Activated CD4-positive, alpha-beta memory T cell treated with anti-CD3 and anti-CD28 coated beads for 36 hours (primary cell): ENCODE measurements at regions of chr17 and their contacts with region 1.

Region 1: DNA sequence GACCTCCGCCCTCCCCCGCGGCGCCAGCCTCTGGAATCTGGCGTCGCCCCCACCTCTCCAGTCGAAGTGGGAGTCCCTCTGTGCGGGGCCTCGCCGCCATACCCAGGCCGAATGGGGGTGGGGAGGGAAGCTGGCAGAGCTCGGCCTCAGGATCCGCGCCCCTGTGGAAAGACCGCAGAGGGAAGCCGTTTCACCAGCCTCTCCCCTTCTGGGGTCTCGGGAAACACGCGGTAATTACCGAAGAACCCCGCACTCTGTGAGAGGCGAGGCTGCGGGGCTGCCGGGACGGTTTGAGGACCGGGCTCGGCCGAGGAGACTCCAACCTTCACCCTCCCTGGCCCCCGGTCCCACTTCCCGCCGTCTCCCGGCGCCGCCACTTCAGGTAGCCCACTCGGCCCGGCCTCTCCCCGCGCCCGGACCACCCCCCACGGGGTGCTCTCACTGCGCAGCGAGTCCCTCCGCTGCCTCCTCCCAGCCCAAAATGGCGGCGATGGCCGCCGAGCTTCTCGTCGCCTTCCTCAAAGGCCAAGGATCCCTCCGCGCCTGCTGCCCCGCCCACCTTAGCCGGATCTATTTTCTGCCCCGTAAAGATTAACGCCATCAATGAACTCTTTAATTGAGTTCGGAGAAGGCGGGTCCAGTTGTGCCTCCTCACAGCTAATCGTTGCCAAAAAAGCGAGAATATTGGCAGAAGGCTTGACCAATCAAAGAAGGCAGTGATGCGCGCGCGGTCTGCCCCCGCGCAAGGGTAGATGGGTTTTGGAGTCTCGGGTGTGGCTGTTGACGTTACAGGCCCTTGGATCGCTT is 453 bp upstream of the HEXIM2 start:
- DNase-seq: peak; percentile 99
- H3K4me3 Mint-ChIP-seq: peak overlapping the region; percentile 99
- H3K27ac Mint-ChIP-seq: peak overlapping the region; percentile 99
- H3K4me1 Mint-ChIP-seq: peaks cover 38% of the 10 kb centered on the region
- H3K27me3 Mint-ChIP-seq: peaks cover 2% of the 10 kb centered on the region

Region 2: DNA sequence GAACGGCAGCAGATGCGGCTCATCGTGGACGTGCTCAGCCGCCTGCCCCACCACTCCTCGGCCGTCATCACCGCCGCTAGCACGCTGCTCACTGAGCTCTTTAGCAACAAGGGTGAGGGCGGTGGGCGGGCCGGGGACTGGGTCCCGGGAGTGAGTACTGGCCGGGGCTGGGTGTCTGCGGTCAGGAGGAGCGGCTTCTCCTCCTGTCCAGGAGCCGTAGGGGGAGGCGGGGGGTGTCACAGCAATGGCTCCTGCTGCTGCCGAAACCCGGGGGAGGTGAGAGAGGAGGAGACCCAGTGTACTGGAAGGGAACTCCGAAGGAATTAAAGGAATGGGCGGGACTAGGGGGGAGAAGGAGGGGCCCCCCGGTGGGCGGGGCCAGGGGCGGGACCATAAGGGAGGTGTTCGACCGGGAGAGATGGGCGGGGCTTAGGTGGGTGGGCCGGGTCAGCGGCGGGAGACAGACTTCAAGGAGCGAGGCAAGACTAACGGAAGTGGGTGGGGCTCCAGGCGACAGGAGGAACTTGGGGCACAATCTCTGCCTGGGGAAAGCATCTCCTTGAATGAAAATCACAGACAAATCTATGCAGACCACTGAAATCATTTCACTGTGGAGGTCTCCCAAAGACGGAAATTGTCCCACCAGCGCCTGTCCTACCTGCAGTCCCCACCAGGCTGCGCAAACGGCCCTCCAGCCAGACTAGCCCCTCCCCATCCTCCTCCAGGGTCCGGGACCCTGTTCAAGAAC is 1154.5 kb before region 1 on chr17:
- CTCF ChIA-PET with region 1: no interaction called
- POLR2A ChIA-PET with region 1: no interaction called
- intact Hi-C with region 1: no loop called
- DNase-seq: peak; percentile 100
- H3K4me3 Mint-ChIP-seq: peak overlapping the region; percentile 86
- H3K27ac Mint-ChIP-seq: peak overlapping the region; percentile 3
- H3K4me1 Mint-ChIP-seq: peaks cover 23% of the 10 kb centered on the region
- H3K27me3 Mint-ChIP-seq: peaks cover 6% of the 10 kb centered on the region

Region 3: GRCh38 chr17:44864866-44865660 is 296.2 kb before region 1 on chr17:
- CTCF ChIA-PET with region 1: no interaction called
- POLR2A ChIA-PET with region 1: no interaction called
- intact Hi-C with region 1: no loop called
- DNase-seq: peak; percentile 69
- H3K4me3 Mint-ChIP-seq: no peak overlapping the region
- H3K27ac Mint-ChIP-seq: no peak overlapping the region
- H3K4me1 Mint-ChIP-seq: no peaks in the 10 kb centered on the region
- H3K27me3 Mint-ChIP-seq: no peaks in the 10 kb centered on the region

Region 4: GRCh38 chr17:45051060-45051719 is 110.0 kb before region 1 on chr17 and contains the start of gene DCAKD:
- CTCF ChIA-PET with region 1: no interaction called
- POLR2A ChIA-PET with region 1: no interaction called
- intact Hi-C with region 1: loop called (anchors 1 kb)
- DNase-seq: peak; percentile 95
- H3K4me3 Mint-ChIP-seq: peak within 1 kb of the TSS; percentile 93
- H3K27ac Mint-ChIP-seq: peak within 1 kb of the TSS; percentile 94
- H3K4me1 Mint-ChIP-seq: peaks cover 45% of the 10 kb centered on the region
- H3K27me3 Mint-ChIP-seq: no peaks in the 10 kb centered on the region
- total RNA-seq, gene DCAKD: 32.0 to 34.0 TPM

Region 5: GRCh38 chr17:45110668-45111611 is 50.3 kb before region 1 on chr17:
- CTCF ChIA-PET with region 1: no interaction called
- POLR2A ChIA-PET with region 1: no interaction called
- intact Hi-C with region 1: no loop called
- DNase-seq: no peak
- H3K4me3 Mint-ChIP-seq: no peak overlapping the region
- H3K27ac Mint-ChIP-seq: no peak overlapping the region
- H3K4me1 Mint-ChIP-seq: no peaks in the 10 kb centered on the region
- H3K27me3 Mint-ChIP-seq: no peaks in the 10 kb centered on the region

Region 6: DNA sequence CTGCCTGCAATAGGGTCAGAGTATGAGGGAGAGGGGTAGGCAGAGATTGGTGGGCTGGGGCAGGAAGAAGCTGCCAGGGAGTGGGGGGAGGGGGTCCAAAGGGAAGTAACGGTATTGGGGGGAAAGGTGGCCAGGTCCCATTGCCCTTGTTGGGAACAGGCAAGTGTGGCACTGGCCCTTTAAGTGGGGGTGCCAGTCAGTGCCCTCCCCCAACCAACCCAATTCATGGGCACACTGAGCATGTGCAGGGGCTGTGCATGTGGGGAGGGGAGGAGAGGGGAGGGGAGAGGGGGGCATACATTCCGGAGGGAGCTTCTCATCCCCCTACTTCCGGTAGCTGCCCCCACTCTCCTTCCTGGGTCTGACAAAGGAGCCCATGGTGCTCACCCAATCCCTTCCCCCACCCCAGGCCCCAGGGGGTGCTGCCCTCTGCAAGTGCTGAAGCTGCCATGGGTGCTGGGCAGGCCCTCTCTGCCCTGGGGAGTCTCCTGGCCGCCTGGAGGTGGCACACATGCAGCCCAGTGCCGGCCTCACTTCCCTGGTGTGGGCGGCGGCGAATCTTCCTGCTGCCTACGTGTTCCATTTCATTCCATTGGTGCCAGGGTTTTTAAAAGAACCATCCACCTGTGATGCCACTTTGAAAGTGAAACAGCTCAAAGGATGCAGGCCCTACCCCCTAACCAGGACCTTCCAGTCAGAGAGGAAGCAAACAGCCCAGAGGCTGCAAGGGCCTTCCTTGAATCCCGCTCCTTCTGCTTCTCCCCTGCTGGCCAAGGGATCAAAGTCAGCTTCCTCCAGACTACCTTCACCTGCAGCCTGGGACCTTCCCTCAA is 11.4 kb after region 1 on chr17:
- CTCF ChIA-PET with region 1: interaction called, 10 read pairs
- POLR2A ChIA-PET with region 1: interaction called, 9 read pairs
- intact Hi-C with region 1: loop called (anchors 1 kb)
- DNase-seq: peak; percentile 68
- H3K4me3 Mint-ChIP-seq: peak overlapping the region; percentile 54
- H3K27ac Mint-ChIP-seq: peak overlapping the region; percentile 82
- H3K4me1 Mint-ChIP-seq: peaks cover 11% of the 10 kb centered on the region
- H3K27me3 Mint-ChIP-seq: no peaks in the 10 kb centered on the region

Region 7: GRCh38 chr17:45228763-45229539 is 67.7 kb after region 1 on chr17:
- CTCF ChIA-PET with region 1: no interaction called
- POLR2A ChIA-PET with region 1: interaction called, 16 read pairs
- intact Hi-C with region 1: loop called (anchors 1 kb)
- DNase-seq: peak; percentile 96
- H3K4me3 Mint-ChIP-seq: peak overlapping the region; percentile 100
- H3K27ac Mint-ChIP-seq: peak overlapping the region; percentile 100
- H3K4me1 Mint-ChIP-seq: peaks cover 86% of the 10 kb centered on the region
- H3K27me3 Mint-ChIP-seq: no peaks in the 10 kb centered on the region

Region 8: GRCh38 chr17:45317112-45317928 is 156.1 kb after region 1 on chr17:
- CTCF ChIA-PET with region 1: no interaction called
- POLR2A ChIA-PET with region 1: interaction called, 8 read pairs
- intact Hi-C with region 1: loop called (anchors 2 kb)
- DNase-seq: peak; percentile 100
- H3K4me3 Mint-ChIP-seq: peak overlapping the region; percentile 81
- H3K27ac Mint-ChIP-seq: peak overlapping the region; percentile 89
- H3K4me1 Mint-ChIP-seq: peaks cover 65% of the 10 kb centered on the region
- H3K27me3 Mint-ChIP-seq: no peaks in the 10 kb centered on the region